Prostate gland (tissue), 2 donors: ENCODE measurements at regions of chr9 and their contacts with region 1.

Region 1: DNA sequence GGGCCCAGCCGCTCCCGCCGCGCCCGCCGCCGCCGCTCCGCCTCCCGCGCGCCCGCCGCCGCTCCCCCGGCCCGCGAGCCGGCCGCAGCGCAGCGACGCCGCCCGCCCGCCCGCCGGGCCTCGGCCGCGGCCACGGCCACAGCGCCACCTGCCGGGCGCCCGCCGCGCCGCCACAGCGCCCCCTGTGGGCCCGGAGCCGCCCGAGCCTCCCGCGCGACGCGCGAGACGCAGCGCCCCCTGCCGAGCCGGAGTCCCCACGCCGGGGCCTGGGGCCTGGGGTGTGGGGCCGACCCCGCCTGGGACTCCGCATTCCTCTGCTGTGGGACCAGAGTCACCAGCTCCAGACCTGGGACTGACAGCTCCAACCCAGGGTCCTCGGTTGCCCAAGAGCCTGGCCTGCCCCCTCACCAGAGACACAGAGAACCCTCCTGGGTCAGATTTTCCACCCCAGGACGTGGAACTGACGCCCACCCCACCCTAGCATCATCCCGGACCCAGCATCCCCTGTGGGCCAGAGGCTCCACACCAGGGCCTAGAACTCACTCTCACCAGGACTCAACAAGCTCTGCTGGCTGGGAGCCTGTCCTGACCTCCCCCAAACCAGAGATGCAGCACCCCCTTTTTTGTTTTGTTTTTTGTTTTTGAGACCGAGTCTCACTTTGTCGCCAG is at the start of gene RAPGEF1:
- DNase-seq: no peak
- H3K4me3 ChIP-seq: peak within 1 kb of the TSS; percentile 54 to 55
- H3K27ac ChIP-seq: peak within 1 kb of the TSS; percentile 74 to 85
- H3K4me1 ChIP-seq: peaks cover 6% of the 10 kb centered on the region
- H3K27me3 ChIP-seq: no peaks in the 10 kb centered on the region
- CTCF ChIP-seq: peak; percentile 81 to 98 (median 86)
- POLR2A ChIP-seq: no peak
- total RNA-seq, gene RAPGEF1: 28.6 to 63.8 TPM

Region 2: DNA sequence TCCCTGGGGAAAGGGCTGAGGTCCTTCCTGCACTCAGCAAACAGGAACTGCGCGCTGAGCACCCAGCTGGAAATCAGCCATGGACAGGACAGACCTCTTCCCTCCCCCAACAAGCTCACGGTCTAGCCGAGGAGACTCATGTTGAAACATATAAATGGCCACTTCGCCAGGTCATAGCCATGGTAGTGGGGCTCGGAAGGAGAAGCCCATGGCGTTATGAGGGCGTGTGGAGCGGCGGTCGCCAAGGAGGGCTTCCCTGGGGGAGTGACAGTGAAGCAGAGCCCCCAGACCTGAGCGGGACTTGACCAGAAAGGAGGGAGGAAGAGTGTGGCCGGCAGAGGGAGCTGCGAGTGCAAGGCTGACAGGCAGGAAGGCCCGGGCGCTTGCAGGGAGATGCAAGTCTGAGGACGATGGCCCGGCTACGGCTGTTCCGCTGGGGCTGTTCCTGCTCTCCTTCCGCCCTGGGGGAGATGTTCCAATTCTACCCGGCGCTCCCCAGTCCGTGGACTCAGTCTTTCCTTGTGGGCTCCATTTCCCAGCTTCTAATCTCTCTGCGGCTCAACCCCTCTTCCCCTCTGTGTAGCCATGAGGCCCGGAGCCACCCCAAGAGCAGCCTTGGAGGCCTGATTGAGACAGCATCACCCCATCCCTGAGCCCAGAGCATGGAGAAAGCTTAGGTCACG is 390.1 kb before region 1 on chr9:
- intact Hi-C with region 1: loop called (anchors 5 kb)
- DNase-seq: peak; percentile 91
- H3K4me3 ChIP-seq: peak overlapping the region; percentile 8 to 27
- H3K27ac ChIP-seq: peak overlapping the region in 1 of 2 donors; percentile 33
- H3K4me1 ChIP-seq: no peaks in the 10 kb centered on the region
- H3K27me3 ChIP-seq: no peaks in the 10 kb centered on the region
- CTCF ChIP-seq: peak; percentile 61 to 93 (median 88)
- POLR2A ChIP-seq: no peak

Region 3: DNA sequence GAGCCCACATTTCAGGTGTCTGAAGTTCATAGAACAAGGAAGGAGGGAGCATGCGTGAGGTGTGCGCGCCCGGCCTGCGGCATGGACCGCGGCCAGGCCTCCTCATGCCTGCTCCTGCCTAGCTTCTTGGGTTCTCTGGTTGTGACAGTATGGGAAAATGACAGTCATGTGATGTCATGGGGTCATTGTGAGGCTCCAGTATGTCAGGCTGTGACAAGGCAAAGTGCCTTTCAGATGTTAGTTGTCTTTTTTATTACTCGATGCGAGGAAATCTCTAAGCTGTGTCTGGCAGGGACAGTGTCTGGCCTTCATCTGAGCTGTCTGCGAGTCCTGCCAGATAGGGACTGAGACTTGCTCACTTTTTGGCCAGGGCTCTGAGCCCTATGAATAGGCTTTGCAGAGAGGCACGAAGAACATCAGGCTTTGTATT is 222.3 kb before region 1 on chr9:
- intact Hi-C with region 1: loop called (anchors 10 kb)
- DNase-seq: no peak
- H3K4me3 ChIP-seq: no peak overlapping the region
- H3K27ac ChIP-seq: no peak overlapping the region
- H3K4me1 ChIP-seq: no peaks in the 10 kb centered on the region
- H3K27me3 ChIP-seq: no peaks in the 10 kb centered on the region
- CTCF ChIP-seq: no peak
- POLR2A ChIP-seq: no peak

Region 4: DNA sequence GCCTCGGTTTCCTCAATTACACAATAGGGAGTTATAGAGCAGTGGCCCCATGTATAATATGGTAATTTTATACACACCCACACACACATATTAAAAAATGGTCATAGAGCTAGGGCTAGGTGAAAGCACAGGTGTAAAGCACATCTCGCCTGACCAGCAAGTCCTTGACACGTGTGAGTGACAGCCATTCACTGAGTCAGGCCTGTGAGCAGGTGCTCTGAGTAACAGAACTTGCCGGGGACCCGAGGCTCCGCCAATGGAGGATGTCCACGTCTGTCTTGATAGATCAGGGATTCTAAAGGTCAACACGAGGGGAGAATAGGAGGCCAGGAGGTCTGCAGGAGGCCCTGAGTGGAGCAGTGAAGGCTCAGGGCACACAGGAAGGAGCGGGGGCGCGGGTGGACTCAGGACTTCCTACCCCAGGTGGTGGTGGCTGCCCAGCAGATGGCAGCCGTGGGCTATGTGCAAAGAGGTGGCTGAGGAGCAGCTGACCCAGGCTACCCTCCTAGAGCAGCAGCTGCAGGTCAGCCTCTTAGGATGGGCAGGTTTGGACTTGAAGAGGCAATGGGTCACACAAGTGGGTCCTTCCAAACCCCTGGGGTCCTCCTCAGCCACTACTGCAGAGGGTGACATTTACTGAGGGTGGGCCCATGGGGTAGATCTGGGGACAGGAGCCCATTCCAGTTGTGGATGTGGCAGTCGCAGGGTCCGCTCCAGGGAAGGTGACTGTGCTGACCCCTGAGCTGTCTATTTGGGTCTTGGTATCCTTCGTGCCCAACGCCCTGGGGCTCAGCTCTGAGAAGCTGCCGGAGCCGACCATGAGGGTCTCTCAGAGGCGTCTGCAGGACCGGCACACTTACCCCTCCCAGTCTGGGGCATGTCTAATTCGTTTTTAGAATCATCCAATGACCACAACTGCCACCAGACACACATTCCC is 148.9 kb before region 1 on chr9:
- intact Hi-C with region 1: loop called (anchors 1 kb)
- DNase-seq: peak; percentile 75
- H3K4me3 ChIP-seq: no peak overlapping the region
- H3K27ac ChIP-seq: no peak overlapping the region
- H3K4me1 ChIP-seq: no peaks in the 10 kb centered on the region
- H3K27me3 ChIP-seq: no peaks in the 10 kb centered on the region
- CTCF ChIP-seq: peak; percentile 59 to 96 (median 90)
- POLR2A ChIP-seq: no peak

Region 5: DNA sequence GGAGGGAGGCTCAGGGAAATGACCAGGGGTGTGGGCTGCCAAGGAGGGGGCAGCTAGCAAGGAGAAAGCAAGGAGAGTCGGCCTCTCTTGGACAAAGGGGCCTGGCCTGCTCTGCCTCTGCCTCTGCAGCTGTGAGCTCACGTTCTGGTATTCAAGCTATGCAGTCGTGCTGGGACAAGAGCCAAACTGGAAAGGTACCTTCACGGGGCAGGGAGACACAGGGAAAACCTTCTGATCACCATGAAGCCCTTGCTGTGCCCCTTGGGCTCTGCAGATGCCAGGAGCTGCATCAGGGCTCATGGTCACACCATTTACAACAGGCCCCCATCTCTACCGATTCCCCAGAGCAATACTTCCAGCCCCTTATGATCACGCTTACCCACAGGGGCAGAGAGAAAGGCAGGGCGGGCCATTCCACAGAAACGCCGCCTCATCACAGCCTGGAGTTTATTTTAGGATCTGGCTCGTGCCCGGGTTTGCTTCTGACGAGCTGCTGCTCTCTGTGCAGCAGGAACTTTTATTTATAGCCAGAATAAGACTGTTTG is 131.5 kb before region 1 on chr9:
- intact Hi-C with region 1: loop called (anchors 5 kb)
- DNase-seq: peak; percentile 87
- H3K4me3 ChIP-seq: no peak overlapping the region
- H3K27ac ChIP-seq: peak overlapping the region; percentile 73 to 84
- H3K4me1 ChIP-seq: peaks cover 7% of the 10 kb centered on the region
- H3K27me3 ChIP-seq: no peaks in the 10 kb centered on the region
- CTCF ChIP-seq: no peak
- POLR2A ChIP-seq: no peak

Region 6: GRCh38 chr9:131776473-131776872 is 36.4 kb after region 1 on chr9:
- intact Hi-C with region 1: no loop called
- DNase-seq: no peak
- H3K4me3 ChIP-seq: no peak overlapping the region
- H3K27ac ChIP-seq: no peak overlapping the region
- H3K4me1 ChIP-seq: no peaks in the 10 kb centered on the region
- H3K27me3 ChIP-seq: no peaks in the 10 kb centered on the region
- CTCF ChIP-seq: no peak
- POLR2A ChIP-seq: no peak